ENCODE measurements at regions of chr17 and their contacts with region 1.

Region 1: GRCh38 chr17:53630638-53631037 is 192.1 kb upstream of the KIF2B start:
- DNase-seq: no peak
- H3K4me3 ChIP-seq: no peak overlapping the region
- H3K27ac ChIP-seq: no peak overlapping the region
- H3K4me1 ChIP-seq: no peaks in the 10 kb centered on the region
- H3K27me3 ChIP-seq: no peaks in the 10 kb centered on the region
- CTCF ChIP-seq: no peak
- POLR2A ChIP-seq: no peak

Region 2: GRCh38 chr17:53543472-53543871 is 87.2 kb before region 1 on chr17:
- intact Hi-C with region 1: no loop called
- DNase-seq: no peak
- H3K4me3 ChIP-seq: no peak overlapping the region
- H3K27ac ChIP-seq: no peak overlapping the region
- H3K4me1 ChIP-seq: no peaks in the 10 kb centered on the region
- H3K27me3 ChIP-seq: no peaks in the 10 kb centered on the region
- CTCF ChIP-seq: no peak
- POLR2A ChIP-seq: no peak

Region 3: GRCh38 chr17:54663039-54663876 is 1032.6 kb after region 1 on chr17:
- intact Hi-C with region 1: loop called (anchors 5 kb)
- DNase-seq: no peak
- H3K4me3 ChIP-seq: no peak overlapping the region
- H3K27ac ChIP-seq: no peak overlapping the region
- H3K4me1 ChIP-seq: no peaks in the 10 kb centered on the region
- H3K27me3 ChIP-seq: no peaks in the 10 kb centered on the region
- CTCF ChIP-seq: no peak
- POLR2A ChIP-seq: no peak

Region 4: DNA sequence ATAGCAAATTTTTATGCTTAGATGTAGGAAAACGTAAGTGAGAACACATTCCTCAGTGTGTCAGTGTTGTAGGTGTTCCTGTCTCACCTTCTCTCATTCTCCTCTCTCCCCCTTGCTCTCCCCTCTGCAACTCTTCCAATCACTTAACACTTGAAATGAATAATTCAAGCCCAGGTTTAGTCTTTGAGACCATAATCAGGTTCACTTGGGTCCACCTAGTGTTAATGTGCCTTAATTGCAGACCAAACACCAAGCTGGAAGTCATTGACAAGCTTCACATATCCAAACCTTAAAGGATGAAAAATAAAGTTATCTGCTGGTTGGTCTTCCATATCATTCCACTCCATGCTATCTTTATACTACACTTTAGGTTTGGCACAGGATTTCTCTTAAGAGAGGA is 1374.9 kb after region 1 on chr17:
- intact Hi-C with region 1: loop called (anchors 10 kb)
- DNase-seq: no peak
- H3K4me3 ChIP-seq: no peak overlapping the region
- H3K27ac ChIP-seq: no peak overlapping the region
- H3K4me1 ChIP-seq: no peaks in the 10 kb centered on the region
- H3K27me3 ChIP-seq: no peaks in the 10 kb centered on the region
- CTCF ChIP-seq: no peak
- POLR2A ChIP-seq: no peak